Dendritic cell treated with granulocyte-macrophage colony-stimulating factor and Interleukin-4, amounts not matched to agents 40 ng/mL and 50 ng/mL, for 4 days (primary cell): ENCODE measurements at regions of chr7 and their contacts with region 1.

Region 1: GRCh38 chr7:29146057-29146706 is at the start of gene CPVL:
- H3K4me3 Mint-ChIP-seq: peak within 1 kb of the TSS; percentile 98
- H3K27ac Mint-ChIP-seq: peak within 1 kb of the TSS; percentile 93
- H3K4me1 Mint-ChIP-seq: peaks cover 67% of the 10 kb centered on the region
- H3K27me3 Mint-ChIP-seq: no peaks in the 10 kb centered on the region

Region 2: DNA sequence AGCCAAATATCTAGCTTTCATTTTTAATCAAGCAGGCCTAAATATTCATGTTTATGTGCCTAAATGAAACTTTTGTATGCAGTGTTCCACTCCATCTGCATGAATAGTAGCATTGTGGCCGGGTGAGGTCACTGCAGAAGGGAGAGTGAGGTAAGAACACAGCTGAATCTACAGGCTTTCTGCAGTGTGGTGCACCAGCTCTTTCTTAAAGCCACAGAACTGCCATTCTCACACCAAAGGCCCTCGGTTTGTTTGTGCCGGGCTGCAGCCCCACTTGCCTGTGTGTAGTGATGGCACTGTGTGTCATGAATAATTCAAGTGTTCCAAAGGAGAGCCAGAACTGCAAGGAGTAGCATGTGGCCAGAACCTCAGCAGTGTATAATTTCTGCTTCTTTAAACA is 392.2 kb before region 1 on chr7:
- intact Hi-C with region 1: no loop called
- H3K4me3 Mint-ChIP-seq: no peak overlapping the region
- H3K27ac Mint-ChIP-seq: no peak overlapping the region
- H3K4me1 Mint-ChIP-seq: peaks cover 13% of the 10 kb centered on the region
- H3K27me3 Mint-ChIP-seq: peaks cover 3% of the 10 kb centered on the region

Region 3: DNA sequence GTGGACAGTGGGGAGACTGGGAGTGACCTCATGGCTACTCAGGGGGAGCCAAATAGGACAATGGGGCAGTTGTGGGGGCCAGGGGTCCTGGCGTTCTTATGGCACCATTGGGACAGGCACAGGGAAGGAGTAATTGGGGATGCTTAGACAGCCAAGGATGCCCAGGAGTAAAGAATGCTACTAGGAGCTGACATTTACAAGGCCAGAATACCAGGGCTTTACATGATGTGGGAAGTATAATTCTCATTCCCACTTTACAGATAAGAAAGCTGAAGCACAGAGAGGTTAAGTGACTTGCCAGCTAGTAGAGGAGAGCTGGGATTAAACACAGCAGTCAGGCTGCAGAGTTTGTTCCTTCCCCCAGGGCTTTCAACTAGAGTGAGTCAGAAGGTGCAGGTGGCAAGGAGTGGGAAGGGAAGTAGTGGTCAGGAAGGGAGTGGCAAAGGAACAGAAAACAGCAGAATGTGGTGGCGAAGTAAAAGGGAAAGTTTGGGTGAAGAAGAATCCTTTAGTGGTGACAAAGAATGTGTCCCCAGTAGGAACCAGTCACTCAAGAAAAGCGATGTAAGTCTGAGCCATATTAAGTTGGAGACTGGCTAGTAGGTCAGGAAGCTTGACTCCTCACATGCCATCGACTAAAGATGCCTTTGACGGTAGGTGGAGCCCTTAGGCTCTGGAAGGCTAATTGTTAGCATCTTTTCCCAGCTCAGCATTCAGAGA is 32.6 kb before region 1 on chr7:
- intact Hi-C with region 1: loop called (anchors 5 kb)
- H3K4me3 Mint-ChIP-seq: peak overlapping the region; percentile 2
- H3K27ac Mint-ChIP-seq: peak overlapping the region; percentile 59
- H3K4me1 Mint-ChIP-seq: peaks cover 77% of the 10 kb centered on the region
- H3K27me3 Mint-ChIP-seq: no peaks in the 10 kb centered on the region

Region 4: DNA sequence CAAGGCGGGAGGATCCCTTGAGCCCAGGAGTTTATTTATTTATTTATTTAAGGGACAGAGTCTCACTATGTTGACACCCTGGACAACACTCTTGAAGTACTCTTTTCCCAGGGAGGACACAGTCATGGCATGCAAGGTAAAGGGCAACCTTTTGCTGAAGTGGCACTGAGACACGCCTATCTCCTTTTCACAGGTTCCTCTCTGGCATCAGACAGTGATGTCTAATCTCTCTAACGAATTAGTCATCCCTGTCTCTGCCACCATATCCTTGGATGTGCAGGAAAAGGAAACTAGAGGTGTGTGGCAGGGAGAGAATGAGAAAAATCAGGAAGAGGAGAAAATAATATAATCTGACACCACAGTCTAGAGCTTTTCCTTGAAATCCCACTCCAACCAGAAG is 19.4 kb before region 1 on chr7:
- intact Hi-C with region 1: no loop called
- H3K4me3 Mint-ChIP-seq: no peak overlapping the region
- H3K27ac Mint-ChIP-seq: peak overlapping the region; percentile 15
- H3K4me1 Mint-ChIP-seq: peaks cover 55% of the 10 kb centered on the region
- H3K27me3 Mint-ChIP-seq: no peaks in the 10 kb centered on the region